ENCODE measurements at regions of chr7 and their contacts with region 1.

Region 1: GRCh38 chr7:44847508-44847920 is 373 bp downstream of the H2AZ2 start:
- DNase-seq: peak; percentile 89 to 94
- ATAC-seq: peak; percentile 78 to 84 (median 80)
- H3K4me3 ChIP-seq: peak overlapping the region; percentile 82
- H3K27ac ChIP-seq: peak overlapping the region; percentile 95
- H3K4me1 ChIP-seq: peaks cover 33% of the 10 kb centered on the region
- H3K27me3 ChIP-seq: no peaks in the 10 kb centered on the region
- CTCF ChIP-seq: peak; percentile 88

Region 2: DNA sequence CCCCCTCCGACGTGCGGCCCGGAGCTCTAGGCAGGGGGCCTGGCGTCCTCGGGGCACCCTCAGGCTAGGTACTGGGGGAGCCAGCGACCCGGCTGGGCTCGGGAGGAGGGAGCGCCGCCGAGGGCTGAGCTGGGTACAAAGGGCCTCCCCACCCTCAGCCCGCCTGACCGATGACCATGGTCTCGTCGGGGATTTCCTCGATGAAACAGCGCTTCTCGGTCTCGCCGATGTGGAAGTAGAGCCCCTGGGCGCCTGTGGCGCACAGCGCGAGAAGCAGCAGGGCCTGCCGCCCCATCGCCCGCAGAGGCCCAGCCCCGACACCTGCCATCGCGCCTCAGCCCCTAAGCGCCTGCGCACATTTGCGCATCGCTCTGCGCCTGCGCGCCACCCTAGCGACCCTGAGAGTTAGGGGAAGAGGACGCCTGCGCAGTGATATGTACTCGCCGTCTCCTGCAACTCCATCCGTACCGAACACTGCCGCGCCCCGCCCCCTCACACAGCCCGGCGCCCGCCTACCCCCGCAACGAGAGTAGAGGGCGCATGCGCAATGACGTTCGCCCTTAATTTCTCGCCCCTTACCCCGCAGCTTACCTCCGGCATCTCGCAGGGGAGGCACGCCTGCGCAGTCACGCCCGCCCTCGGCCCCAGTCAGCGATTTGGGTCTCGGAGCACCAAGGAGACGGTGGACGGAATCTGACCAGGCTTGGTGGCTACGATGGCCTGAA is 265.5 kb before region 1 on chr7 and contains the start of gene TMED4:
- intact Hi-C with region 1: loop called (anchors 2 to 5 kb)
- DNase-seq: peak; percentile 100
- ATAC-seq: peak; percentile 94 to 98 (median 96)
- H3K4me3 ChIP-seq: peak within 1 kb of the TSS; percentile 96
- H3K27ac ChIP-seq: peak within 1 kb of the TSS; percentile 94
- H3K4me1 ChIP-seq: peaks cover 22% of the 10 kb centered on the region
- H3K27me3 ChIP-seq: no peaks in the 10 kb centered on the region
- CTCF ChIP-seq: no peak
- total RNA-seq, gene TMED4: 43.1 to 64.4 (median 46.0) TPM

Region 3: GRCh38 chr7:44587843-44588711 is 259.4 kb before region 1 on chr7:
- intact Hi-C with region 1: loop called (anchors 2 to 5 kb)
- DNase-seq: no peak
- ATAC-seq: peak; percentile 60 to 86 (median 72)
- H3K4me3 ChIP-seq: no peak overlapping the region
- H3K27ac ChIP-seq: no peak overlapping the region
- H3K4me1 ChIP-seq: peaks cover 6% of the 10 kb centered on the region
- H3K27me3 ChIP-seq: no peaks in the 10 kb centered on the region
- CTCF ChIP-seq: peak; percentile 64

Region 4: DNA sequence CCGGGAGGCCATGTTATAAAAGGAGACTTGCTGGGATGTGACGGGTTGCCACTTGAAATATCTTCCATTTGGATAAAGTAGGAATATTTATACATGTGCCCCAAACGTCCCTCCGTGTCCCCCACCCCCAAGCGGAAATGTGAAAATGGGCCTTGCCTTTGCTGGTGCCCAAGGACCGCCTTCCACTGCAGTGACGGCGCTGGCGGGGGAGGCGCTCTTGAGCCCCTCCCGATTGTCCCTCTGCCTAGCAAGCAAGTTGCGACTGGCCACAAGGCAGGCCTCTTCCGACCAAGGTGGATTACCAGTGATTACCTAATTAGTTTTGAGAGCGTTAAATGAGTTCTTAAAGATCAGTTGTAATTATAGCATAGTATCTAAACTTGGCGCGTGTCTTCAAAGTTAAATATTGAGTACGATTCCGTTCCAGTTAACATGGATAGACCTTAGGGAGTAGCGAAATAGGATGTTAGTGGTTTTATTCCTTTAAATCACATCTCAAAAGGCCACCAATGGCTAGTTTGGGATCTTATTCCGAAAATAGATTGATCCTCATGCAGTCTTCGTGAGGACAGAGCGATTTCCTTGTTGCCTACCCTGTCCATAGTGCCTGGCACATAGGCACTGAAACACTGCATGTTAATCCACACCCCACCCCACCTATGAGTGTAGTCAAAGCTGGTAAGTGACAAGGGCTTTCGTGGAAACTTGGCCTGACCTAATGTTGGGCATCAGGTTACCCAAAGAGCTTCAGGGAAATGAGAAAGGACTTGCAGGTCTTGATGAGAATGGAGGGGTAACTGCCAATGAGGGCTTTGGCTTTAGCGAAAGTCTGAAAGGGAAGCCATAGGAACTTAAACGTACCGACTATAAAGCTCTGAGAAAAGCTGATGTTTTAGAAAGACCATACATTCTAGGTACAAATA is 49.9 kb before region 1 on chr7:
- intact Hi-C with region 1: loop called in 1 of 2 experiments (anchors 2 kb)
- DNase-seq: peak; percentile 89 to 92
- ATAC-seq: peak; percentile 79 to 82 (median 82)
- H3K4me3 ChIP-seq: peak overlapping the region; percentile 70
- H3K27ac ChIP-seq: peak overlapping the region; percentile 89
- H3K4me1 ChIP-seq: peaks cover 11% of the 10 kb centered on the region
- H3K27me3 ChIP-seq: no peaks in the 10 kb centered on the region
- CTCF ChIP-seq: peak; percentile 20

Region 5: GRCh38 chr7:44885394-44886317 is 38.1 kb after region 1 on chr7 and contains the start of gene PURB:
- intact Hi-C with region 1: loop called (anchors 2 to 5 kb)
- DNase-seq: peak; percentile 96 to 98
- ATAC-seq: peak; percentile 91 to 94 (median 92)
- H3K4me3 ChIP-seq: peak within 1 kb of the TSS; percentile 97
- H3K27ac ChIP-seq: peak within 1 kb of the TSS; percentile 99
- H3K4me1 ChIP-seq: peaks cover 42% of the 10 kb centered on the region
- H3K27me3 ChIP-seq: no peaks in the 10 kb centered on the region
- CTCF ChIP-seq: no peak
- total RNA-seq, gene PURB: 14.1 to 27.2 (median 21.8) TPM

Region 6: GRCh38 chr7:44986218-44987053 is 138.9 kb after region 1 on chr7:
- intact Hi-C with region 1: no loop called
- DNase-seq: peak; percentile 95 to 98
- ATAC-seq: peak; percentile 97 to 99 (median 98)
- H3K4me3 ChIP-seq: peak overlapping the region; percentile 92
- H3K27ac ChIP-seq: peak overlapping the region; percentile 96
- H3K4me1 ChIP-seq: peaks cover 20% of the 10 kb centered on the region
- H3K27me3 ChIP-seq: no peaks in the 10 kb centered on the region
- CTCF ChIP-seq: no peak

Region 7: GRCh38 chr7:45073786-45074527 is 226.4 kb after region 1 on chr7:
- intact Hi-C with region 1: no loop called
- DNase-seq: no peak
- ATAC-seq: peak in 2 of 4 donors; percentile 15 to 21
- H3K4me3 ChIP-seq: no peak overlapping the region
- H3K27ac ChIP-seq: no peak overlapping the region
- H3K4me1 ChIP-seq: no peaks in the 10 kb centered on the region
- H3K27me3 ChIP-seq: no peaks in the 10 kb centered on the region
- CTCF ChIP-seq: no peak